ENCODE measurements at regions of chr15 and their contacts with region 1.

Region 1: GRCh38 chr15:80776420-80777045 is 2.6 kb upstream of the CEMIP start:
- DNase-seq: peak; percentile 36 to 83
- H3K4me3 ChIP-seq: no peak overlapping the region
- H3K27ac ChIP-seq: no peak overlapping the region
- H3K4me1 ChIP-seq: peaks cover 0 to 7% (median 4%) of the 10 kb centered on the region in 4 experiments; a peak in 5 of 7 replicates
- H3K27me3 ChIP-seq: peaks cover 4 to 40% (median 33%) of the 10 kb centered on the region in 4 experiments
- CTCF ChIP-seq: peak; percentile 76 to 89 (median 88)
- EP300 ChIP-seq: no peak
- POLR2A ChIP-seq: no peak
- RAD21 ChIP-seq: peak; percentile 93

Region 2: GRCh38 chr15:80396094-80396493 is 380.4 kb before region 1 on chr15:
- CTCF ChIA-PET with region 1: no interaction called
- POLR2A ChIA-PET with region 1: no interaction called
- DNase-seq: no peak
- H3K4me3 ChIP-seq: no peak overlapping the region
- H3K27ac ChIP-seq: no peak overlapping the region
- H3K4me1 ChIP-seq: peaks cover 0 to 4% (median under 1%) of the 10 kb centered on the region in 4 experiments; a peak in 3 of 7 replicates
- H3K27me3 ChIP-seq: no peaks in the 10 kb centered on the region
- CTCF ChIP-seq: no peak
- EP300 ChIP-seq: no peak
- POLR2A ChIP-seq: no peak
- RAD21 ChIP-seq: no peak

Region 3: DNA sequence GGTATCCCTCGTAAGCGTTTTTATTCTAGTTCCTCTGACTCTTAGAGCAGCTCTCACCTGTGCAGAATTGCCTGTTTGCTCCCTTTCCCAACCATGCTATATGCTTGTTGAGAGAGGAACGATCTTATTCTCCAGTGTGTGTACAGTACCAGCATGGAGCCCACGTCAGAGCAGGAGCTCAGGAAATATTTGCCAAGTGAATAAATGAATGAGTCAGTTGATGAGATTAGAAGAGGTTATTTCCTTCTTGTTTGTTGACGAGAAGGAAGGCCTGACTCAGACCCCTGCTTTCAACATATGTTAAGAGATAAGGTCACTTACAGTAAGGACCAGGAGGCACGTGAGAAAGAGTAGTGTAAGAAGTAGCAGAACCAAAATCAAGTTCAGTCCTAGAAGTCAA is 187.7 kb before region 1 on chr15:
- CTCF ChIA-PET with region 1: interaction called, 18 read pairs
- POLR2A ChIA-PET with region 1: no interaction called
- DNase-seq: no peak
- H3K4me3 ChIP-seq: no peak overlapping the region
- H3K27ac ChIP-seq: no peak overlapping the region
- H3K4me1 ChIP-seq: peaks cover 0 to 6% (median 5%) of the 10 kb centered on the region in 4 experiments; a peak in 4 of 7 replicates
- H3K27me3 ChIP-seq: no peaks in the 10 kb centered on the region
- CTCF ChIP-seq: no peak
- EP300 ChIP-seq: no peak
- POLR2A ChIP-seq: no peak
- RAD21 ChIP-seq: no peak

Region 4: GRCh38 chr15:80629355-80629754 is 147.2 kb before region 1 on chr15:
- CTCF ChIA-PET with region 1: interaction called, 10 read pairs
- POLR2A ChIA-PET with region 1: no interaction called
- DNase-seq: no peak
- H3K4me3 ChIP-seq: no peak overlapping the region
- H3K27ac ChIP-seq: no peak overlapping the region
- H3K4me1 ChIP-seq: no peaks in the 10 kb centered on the region; a peak in 1 of 7 replicates
- H3K27me3 ChIP-seq: no peaks in the 10 kb centered on the region
- CTCF ChIP-seq: no peak
- EP300 ChIP-seq: no peak
- POLR2A ChIP-seq: no peak
- RAD21 ChIP-seq: no peak

Region 5: DNA sequence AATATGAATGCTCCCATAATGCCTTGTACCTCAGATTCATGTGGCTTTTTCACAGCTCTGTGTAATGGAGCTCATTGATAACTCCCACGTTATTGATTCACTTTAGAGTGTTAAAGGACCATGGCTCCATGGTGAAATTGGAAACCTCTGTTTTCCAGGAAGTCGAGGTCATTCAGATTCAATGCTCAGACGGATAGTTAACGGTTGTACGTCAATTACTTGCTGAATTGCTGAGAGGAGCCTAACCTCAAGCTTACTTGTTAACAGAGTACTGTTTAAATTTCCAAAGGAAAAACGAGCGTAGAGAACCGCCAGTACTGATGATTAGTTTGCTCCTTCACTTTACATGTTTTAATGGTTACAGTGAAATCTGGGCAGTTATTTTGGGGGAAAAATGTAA is 70.4 kb before region 1 on chr15:
- CTCF ChIA-PET with region 1: interaction called, 14 read pairs
- POLR2A ChIA-PET with region 1: no interaction called
- DNase-seq: no peak
- H3K4me3 ChIP-seq: peak overlapping the region in 1 of 4 experiments; percentile 20; a peak in 1 of 8 replicates
- H3K27ac ChIP-seq: no peak overlapping the region
- H3K4me1 ChIP-seq: peaks cover 0 to 10% (median 7%) of the 10 kb centered on the region in 4 experiments; a peak in 4 of 7 replicates
- H3K27me3 ChIP-seq: no peaks in the 10 kb centered on the region
- CTCF ChIP-seq: no peak
- EP300 ChIP-seq: no peak
- POLR2A ChIP-seq: no peak
- RAD21 ChIP-seq: no peak

Region 6: GRCh38 chr15:80844011-80844755 is 67.7 kb after region 1 on chr15:
- CTCF ChIA-PET with region 1: interaction called, 10 read pairs
- POLR2A ChIA-PET with region 1: no interaction called
- DNase-seq: no peak
- H3K4me3 ChIP-seq: no peak overlapping the region
- H3K27ac ChIP-seq: no peak overlapping the region
- H3K4me1 ChIP-seq: peaks cover 0 to 2% (median 0%) of the 10 kb centered on the region in 4 experiments; a peak in 3 of 7 replicates
- H3K27me3 ChIP-seq: no peaks in the 10 kb centered on the region
- CTCF ChIP-seq: no peak
- EP300 ChIP-seq: no peak
- POLR2A ChIP-seq: no peak
- RAD21 ChIP-seq: no peak

Region 7: GRCh38 chr15:80915472-80915871 is 138.9 kb after region 1 on chr15:
- CTCF ChIA-PET with region 1: interaction called, 12 read pairs
- POLR2A ChIA-PET with region 1: interaction called, 3 read pairs
- DNase-seq: peak; percentile 56 to 58
- H3K4me3 ChIP-seq: no peak overlapping the region
- H3K27ac ChIP-seq: no peak overlapping the region
- H3K4me1 ChIP-seq: peaks cover 0 to 3% (median 3%) of the 10 kb centered on the region in 4 experiments; a peak in 4 of 7 replicates
- H3K27me3 ChIP-seq: peaks cover 0 to 2% (median 0%) of the 10 kb centered on the region in 4 experiments; a peak in 2 of 7 replicates
- CTCF ChIP-seq: peak; percentile 55 to 76 (median 57); a peak in 3 of 4 replicates
- EP300 ChIP-seq: no peak
- POLR2A ChIP-seq: no peak
- RAD21 ChIP-seq: peak; percentile 78 to 80

Region 8: DNA sequence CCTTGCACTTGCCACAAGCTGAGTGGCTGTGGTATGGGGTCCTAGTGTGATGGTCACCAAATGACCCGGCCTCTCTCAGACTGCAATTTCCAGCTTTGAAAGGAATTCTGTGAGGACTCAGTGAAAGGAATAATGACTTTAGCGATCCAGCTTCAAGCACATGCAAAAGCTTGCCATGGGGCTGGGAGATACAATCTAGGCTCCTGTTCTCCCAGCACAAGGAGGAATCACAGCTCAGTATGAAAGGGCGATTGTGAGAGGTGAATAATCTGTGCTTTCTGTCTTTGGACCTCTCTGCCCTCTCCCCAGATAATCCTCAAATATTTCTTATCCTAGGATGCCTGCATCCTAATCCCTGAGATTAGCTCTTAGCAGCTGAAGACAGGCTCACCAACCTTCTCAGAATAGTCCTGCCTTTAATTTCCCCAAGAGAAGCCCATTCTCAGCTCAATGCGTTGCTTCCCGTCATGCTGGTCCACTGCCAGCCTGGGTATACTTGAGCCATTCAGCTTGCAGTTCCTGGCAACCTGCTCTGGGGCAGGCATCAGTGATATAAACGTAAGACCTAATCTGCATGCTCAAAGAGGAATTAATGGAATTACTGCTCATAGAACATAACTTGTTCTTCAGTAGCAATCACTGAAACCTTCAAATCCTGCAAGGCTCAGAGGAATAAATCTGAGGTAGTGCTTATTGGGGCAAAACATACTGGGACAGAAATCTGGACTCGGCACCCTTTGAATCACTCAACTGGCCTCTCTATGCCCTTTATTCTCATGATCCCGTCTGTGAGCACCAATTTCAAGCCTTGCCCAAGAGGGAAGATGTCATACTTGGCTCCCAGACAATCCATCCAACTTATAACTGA is 239.3 kb after region 1 on chr15:
- CTCF ChIA-PET with region 1: no interaction called
- POLR2A ChIA-PET with region 1: no interaction called
- DNase-seq: no peak
- H3K4me3 ChIP-seq: no peak overlapping the region
- H3K27ac ChIP-seq: no peak overlapping the region
- H3K4me1 ChIP-seq: no peaks in the 10 kb centered on the region
- H3K27me3 ChIP-seq: no peaks in the 10 kb centered on the region
- CTCF ChIP-seq: no peak
- EP300 ChIP-seq: no peak
- POLR2A ChIP-seq: no peak
- RAD21 ChIP-seq: no peak

Region 9: DNA sequence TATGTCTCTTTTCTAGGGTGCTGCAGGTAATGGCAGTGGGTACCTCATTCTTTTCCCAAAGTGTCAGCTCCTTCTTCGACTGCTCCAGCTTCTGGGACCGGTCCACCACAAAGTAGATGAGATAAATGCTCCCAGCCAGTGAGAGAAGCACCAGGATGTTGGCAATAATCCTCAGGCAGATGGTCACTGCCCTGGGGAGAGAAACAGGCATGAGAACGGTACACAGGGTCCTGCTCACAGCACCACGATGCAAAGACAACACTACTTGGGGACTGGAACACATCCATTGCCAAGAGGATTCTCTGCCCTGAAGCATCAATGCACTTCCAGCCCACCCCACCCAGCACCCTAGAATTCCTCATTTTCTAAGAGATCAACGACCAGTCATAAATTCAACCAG is 575.1 kb after region 1 on chr15:
- CTCF ChIA-PET with region 1: no interaction called
- POLR2A ChIA-PET with region 1: no interaction called
- DNase-seq: no peak
- H3K4me3 ChIP-seq: no peak overlapping the region
- H3K27ac ChIP-seq: no peak overlapping the region
- H3K4me1 ChIP-seq: peaks cover 0 to 4% (median 0%) of the 10 kb centered on the region in 4 experiments; a peak in 2 of 7 replicates
- H3K27me3 ChIP-seq: no peaks in the 10 kb centered on the region
- CTCF ChIP-seq: no peak
- EP300 ChIP-seq: no peak
- POLR2A ChIP-seq: no peak
- RAD21 ChIP-seq: no peak

Measured in H1 (cell line).